ENCODE measurements at regions of chr12 and their contacts with region 1.

Region 1: GRCh38 chr12:122646517-122647217 is 56.5 kb downstream of the HCAR2 start:
- DNase-seq: peak; percentile 60
- H3K4me3 ChIP-seq: no peak overlapping the region
- H3K27ac ChIP-seq: peak overlapping the region; percentile 39
- H3K27me3 ChIP-seq: no peaks in the 10 kb centered on the region
- CTCF ChIP-seq: no peak

Region 2: DNA sequence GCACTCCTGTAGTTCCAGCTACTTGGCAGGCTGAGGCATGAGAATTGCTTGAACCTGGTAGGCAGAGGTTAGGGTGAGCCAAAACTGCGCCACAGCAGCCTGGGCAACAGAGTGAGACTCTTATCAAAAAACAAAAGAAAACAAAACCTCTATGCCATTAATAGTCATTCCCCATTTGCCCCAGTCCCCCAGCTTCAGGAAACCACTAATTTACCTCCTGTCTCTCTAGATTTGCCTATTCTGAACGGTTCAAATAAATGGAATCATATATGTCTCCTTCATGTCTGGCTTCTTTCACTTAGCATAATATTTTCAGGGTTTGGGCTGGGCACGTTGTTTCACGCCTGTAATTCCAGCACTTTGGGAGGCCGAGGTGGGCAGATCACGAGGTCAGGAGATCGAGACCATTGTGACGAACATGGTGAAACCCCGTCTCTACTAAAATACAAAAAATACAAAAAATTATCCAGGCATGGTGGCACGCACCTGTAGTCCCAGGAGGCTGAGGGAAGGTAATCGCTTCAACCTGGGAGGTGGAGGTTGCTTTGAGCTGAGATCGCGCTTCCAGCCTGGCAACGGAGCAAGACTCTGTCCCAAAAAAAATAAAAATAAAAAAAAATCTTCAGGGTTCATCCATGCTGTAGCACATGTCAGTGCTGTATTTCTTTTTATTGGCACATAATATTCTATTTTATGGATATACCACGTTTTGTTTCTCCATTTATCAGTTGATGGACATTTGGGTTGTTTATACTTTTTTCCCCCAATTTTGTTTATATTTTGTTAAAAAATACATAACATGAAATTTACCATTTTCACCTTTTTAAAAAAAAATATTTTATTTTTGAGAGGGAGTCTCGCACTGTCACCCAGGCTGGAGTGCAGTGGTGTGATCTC is 87.7 kb before region 1 on chr12:
- CTCF ChIA-PET with region 1: no interaction called
- POLR2A ChIA-PET with region 1: interaction called, 13 read pairs
- DNase-seq: no peak
- H3K4me3 ChIP-seq: no peak overlapping the region
- H3K27ac ChIP-seq: no peak overlapping the region
- H3K27me3 ChIP-seq: no peaks in the 10 kb centered on the region
- CTCF ChIP-seq: no peak

Region 3: DNA sequence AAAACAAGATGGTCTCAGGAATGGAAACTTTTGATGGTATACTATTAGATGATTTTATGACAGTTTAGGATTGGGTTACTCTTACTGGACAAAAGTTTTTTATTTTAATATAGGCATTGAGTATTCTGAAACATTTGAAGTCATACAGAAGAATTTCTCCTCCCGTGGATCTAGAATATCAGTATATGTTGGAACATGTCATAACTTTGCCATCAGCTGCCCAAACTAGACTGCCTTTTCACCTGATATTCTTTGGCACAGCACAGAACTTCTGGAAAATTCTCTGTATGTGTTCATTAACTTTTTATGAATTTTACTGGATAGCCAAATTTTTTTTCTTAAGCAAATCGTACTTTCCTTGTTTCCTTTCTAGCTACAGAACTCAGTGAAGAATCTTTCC is 44.2 kb before region 1 on chr12:
- CTCF ChIA-PET with region 1: no interaction called
- POLR2A ChIA-PET with region 1: no interaction called
- DNase-seq: no peak
- H3K4me3 ChIP-seq: no peak overlapping the region
- H3K27ac ChIP-seq: no peak overlapping the region
- H3K27me3 ChIP-seq: no peaks in the 10 kb centered on the region
- CTCF ChIP-seq: no peak